Activated naive CD4-positive, alpha-beta T cell treated with anti-CD3 and anti-CD28 coated beads for 36 hours (primary cell): ENCODE measurements at regions of chr1 and their contacts with region 1.

Region 1: GRCh38 chr1:207499573-207499972 is 3.6 kb downstream of the CR1 start:
- DNase-seq: peak; percentile 88
- H3K4me3 Mint-ChIP-seq: no peak overlapping the region
- H3K27ac Mint-ChIP-seq: peak overlapping the region; percentile 51
- H3K4me1 Mint-ChIP-seq: peaks cover 26% of the 10 kb centered on the region
- H3K27me3 Mint-ChIP-seq: peaks cover 25% of the 10 kb centered on the region

Region 2: GRCh38 chr1:207084701-207085180 is 414.8 kb before region 1 on chr1:
- CTCF ChIA-PET with region 1: interaction called, 23 read pairs
- intact Hi-C with region 1: loop called (anchors 1 kb)
- DNase-seq: peak; percentile 73
- H3K4me3 Mint-ChIP-seq: no peak overlapping the region
- H3K27ac Mint-ChIP-seq: no peak overlapping the region
- H3K4me1 Mint-ChIP-seq: peaks cover 23% of the 10 kb centered on the region
- H3K27me3 Mint-ChIP-seq: no peaks in the 10 kb centered on the region

Region 3: DNA sequence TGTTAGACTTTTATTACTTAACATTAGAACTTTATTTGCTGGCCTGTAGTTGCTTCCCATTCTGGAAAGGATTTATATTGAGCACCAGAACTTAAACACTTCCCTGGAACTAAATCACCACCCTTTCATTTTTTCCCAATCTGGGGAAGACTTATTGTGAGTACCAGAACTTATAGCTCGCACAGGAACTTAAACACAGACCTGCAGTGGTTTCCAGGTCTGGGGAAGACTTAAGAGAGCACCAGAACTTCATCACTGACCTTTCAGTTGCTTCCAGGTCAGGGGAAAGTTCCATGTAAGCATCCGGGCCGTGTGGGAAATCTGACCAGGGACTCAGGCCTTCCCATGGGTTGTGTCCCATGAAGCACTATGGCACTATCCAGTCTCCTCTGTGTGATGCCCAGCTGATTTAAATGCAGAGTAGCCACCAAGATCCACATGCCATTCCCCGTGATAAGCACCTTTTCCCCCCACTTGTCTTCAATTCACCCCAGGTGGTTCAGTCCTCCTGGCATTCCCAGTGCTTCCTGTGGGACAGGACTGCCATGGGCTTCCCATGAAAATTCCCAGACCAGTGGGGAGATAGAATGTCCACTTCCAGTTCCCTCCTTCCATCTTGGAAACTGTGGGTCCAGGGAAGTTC is 346.7 kb before region 1 on chr1:
- CTCF ChIA-PET with region 1: no interaction called
- intact Hi-C with region 1: no loop called
- DNase-seq: no peak
- H3K4me3 Mint-ChIP-seq: no peak overlapping the region
- H3K27ac Mint-ChIP-seq: no peak overlapping the region
- H3K4me1 Mint-ChIP-seq: no peaks in the 10 kb centered on the region
- H3K27me3 Mint-ChIP-seq: peaks cover 4% of the 10 kb centered on the region

Region 4: DNA sequence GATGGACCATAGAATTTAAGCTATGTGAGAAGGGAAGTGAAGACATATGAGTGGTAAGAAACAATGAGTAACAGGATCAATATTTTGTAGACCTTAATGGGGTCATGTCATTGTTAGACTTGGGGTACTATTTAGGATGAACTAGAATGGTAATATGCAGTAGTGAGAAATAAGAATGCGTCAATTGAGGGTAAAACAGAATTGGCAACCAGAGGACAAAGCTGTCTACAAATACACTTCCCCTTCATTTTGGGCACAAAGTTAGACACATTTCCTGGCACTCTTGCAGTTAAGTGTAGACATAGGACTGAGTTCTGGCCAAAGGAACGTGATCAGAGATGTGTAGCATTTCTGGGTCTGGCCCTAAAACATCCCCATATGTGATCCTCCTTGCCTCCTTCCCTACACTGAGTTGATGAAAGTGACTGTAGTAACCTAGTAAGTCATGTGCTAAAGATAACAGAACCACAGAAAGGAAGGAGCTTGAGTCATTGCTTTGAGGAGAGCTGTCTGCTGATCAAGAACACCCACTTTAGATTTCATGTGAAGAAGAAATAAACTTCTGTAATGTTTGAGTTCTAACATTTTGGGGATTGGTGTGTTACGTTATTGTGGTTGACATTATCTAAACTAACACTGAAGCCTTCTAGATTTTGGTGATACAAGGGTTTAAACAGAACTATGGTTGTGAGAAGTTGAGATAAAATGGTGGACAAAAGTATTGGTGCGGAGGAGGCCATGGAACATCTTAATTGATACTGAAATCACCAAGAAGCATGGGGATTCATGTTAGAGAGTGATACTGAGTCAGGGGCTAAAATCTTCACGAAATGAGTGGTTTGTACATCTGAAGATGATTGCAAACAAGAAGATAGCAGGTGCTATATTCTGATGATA is 136.4 kb before region 1 on chr1:
- CTCF ChIA-PET with region 1: no interaction called
- intact Hi-C with region 1: loop called (anchors 1 kb)
- DNase-seq: peak; percentile 39
- H3K4me3 Mint-ChIP-seq: no peak overlapping the region
- H3K27ac Mint-ChIP-seq: no peak overlapping the region
- H3K4me1 Mint-ChIP-seq: peaks cover 5% of the 10 kb centered on the region
- H3K27me3 Mint-ChIP-seq: no peaks in the 10 kb centered on the region

Region 5: DNA sequence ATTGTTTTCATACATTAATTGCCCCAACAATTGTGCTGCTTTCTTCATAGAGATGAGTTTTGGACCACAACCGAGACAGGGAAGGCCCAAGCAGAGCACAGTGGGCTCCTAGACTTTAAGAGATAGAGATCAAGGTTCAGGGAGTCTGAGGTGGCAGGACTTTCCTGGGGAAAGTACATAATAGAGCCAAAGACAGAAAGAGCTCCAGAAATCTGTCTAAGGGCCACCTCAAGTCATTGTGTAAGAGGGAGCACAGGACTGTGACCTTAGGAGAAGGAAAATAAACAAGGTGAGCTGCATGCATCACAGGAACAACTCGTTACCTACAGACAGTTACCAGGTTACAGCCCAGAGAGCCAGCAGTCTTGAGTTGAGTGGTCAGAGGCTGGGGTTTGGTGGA is 86.7 kb before region 1 on chr1:
- CTCF ChIA-PET with region 1: interaction called, 4 read pairs
- intact Hi-C with region 1: loop called (anchors 1 kb)
- DNase-seq: no peak
- H3K4me3 Mint-ChIP-seq: no peak overlapping the region
- H3K27ac Mint-ChIP-seq: peak overlapping the region; percentile 52
- H3K4me1 Mint-ChIP-seq: peaks cover 44% of the 10 kb centered on the region
- H3K27me3 Mint-ChIP-seq: peaks cover 2% of the 10 kb centered on the region

Region 6: DNA sequence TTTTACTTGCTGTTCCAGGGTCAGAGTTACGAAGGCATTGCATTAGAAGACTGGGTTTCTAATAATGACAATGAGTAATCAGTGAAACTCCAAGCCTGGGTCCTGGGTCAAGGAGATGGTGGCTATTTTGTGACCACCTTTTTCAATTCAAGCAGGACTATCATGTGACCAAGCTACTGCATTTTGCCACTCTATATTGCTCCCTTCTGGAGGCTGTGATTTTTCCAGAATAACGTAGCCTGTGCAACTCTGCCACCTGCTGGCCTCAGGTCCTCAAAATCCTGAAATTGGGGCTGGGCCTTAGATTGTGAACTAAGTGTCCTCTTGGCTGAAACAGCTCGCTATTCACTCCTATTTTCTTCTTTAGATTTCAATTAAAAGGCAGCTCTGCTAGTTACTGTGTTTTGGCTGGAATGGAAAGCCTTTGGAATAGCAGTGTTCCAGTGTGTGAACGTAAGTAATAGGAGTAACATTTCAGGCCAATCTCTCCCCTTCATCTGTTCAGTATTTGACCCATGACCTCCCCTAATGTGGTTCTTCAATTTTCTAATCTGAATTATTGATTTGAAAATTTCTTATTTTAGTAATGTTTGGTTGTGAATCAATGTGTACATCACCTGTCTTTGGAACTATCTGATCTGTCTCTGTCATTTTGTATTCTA is 199.4 kb after region 1 on chr1:
- CTCF ChIA-PET with region 1: no interaction called
- intact Hi-C with region 1: loop called (anchors 5 kb)
- DNase-seq: peak; percentile 73
- H3K4me3 Mint-ChIP-seq: no peak overlapping the region
- H3K27ac Mint-ChIP-seq: no peak overlapping the region
- H3K4me1 Mint-ChIP-seq: no peaks in the 10 kb centered on the region
- H3K27me3 Mint-ChIP-seq: no peaks in the 10 kb centered on the region